Aorta (tissue), 5 donors: ENCODE measurements at regions of chr1 and their contacts with region 1.

Region 1: GRCh38 chr1:27489910-27490741 is at the start of gene WASF2:
- DNase-seq: peak; percentile 98
- ATAC-seq: peak; percentile 97
- H3K4me3 ChIP-seq: peak within 1 kb of the TSS; percentile 79 to 97
- H3K27ac ChIP-seq: peak within 1 kb of the TSS; percentile 9 to 87
- H3K4me1 ChIP-seq: no peaks in the 10 kb centered on the region
- H3K27me3 ChIP-seq: no peaks in the 10 kb centered on the region
- total RNA-seq, gene WASF2: 155 to 164 TPM

Region 2: GRCh38 chr1:27402349-27402754 is 87.8 kb before region 1 on chr1:
- intact Hi-C with region 1: loop called in 1 of 2 experiments (anchors 10 kb)
- DNase-seq: peak; percentile 87 to 92
- ATAC-seq: peak; percentile 74
- H3K4me3 ChIP-seq: no peak overlapping the region
- H3K27ac ChIP-seq: peak overlapping the region; percentile 49 to 71
- H3K4me1 ChIP-seq: no peaks in the 10 kb centered on the region
- H3K27me3 ChIP-seq: no peaks in the 10 kb centered on the region

Region 3: DNA sequence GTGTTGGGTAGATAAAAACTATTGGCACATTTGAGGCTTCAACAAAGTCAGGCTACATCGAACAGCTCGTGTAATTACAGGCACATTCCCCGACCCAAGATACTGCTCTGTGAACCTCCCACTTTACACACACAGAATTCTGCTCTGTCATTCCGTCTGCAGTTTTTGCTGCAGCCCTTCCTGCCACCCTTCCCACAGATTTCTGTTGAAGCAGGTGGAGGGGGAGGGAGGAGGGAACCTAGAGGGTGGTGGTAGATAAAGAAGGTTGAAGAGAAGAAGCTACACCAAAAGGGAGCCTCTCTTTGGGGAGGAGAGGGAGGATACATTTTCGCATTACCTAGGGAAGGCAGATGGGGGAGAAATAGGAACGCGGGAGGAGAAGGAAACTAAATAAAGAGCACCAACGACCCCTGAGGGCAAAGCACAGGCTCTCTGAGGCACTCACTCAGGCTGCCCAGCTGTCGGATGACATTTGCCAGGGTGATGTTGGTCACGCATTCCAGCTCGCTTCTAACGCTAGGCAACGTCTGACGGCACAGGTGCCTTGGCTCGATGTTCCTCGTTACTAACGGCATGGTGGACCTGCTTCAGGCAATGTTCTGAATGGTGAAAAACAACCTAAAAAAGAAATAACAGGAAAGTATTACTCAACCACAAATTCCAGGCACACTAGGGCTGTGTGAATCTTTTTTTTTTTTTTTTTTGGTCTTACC is 61.7 kb before region 1 on chr1:
- intact Hi-C with region 1: loop called in 1 of 2 experiments (anchors 5 kb)
- DNase-seq: no peak
- ATAC-seq: peak; percentile 45
- H3K4me3 ChIP-seq: peak overlapping the region in 1 of 2 donors; percentile 14
- H3K27ac ChIP-seq: peak overlapping the region in 1 of 2 donors; percentile 90
- H3K4me1 ChIP-seq: peaks cover 6% of the 10 kb centered on the region in 2 donors
- H3K27me3 ChIP-seq: no peaks in the 10 kb centered on the region

Region 4: GRCh38 chr1:27556781-27557595 is 66.9 kb after region 1 on chr1:
- intact Hi-C with region 1: loop called in 1 of 2 experiments (anchors 5 kb)
- DNase-seq: peak; percentile 98
- ATAC-seq: peak; percentile 82
- H3K4me3 ChIP-seq: no peak overlapping the region
- H3K27ac ChIP-seq: peak overlapping the region in 1 of 2 donors; percentile 48
- H3K4me1 ChIP-seq: peaks cover 0 to 4% of the 10 kb centered on the region in 2 donors
- H3K27me3 ChIP-seq: no peaks in the 10 kb centered on the region